Activated naive CD4-positive, alpha-beta T cell treated with anti-CD3 and anti-CD28 coated beads for 36 hours (primary cell): ENCODE measurements at regions of chr1 and their contacts with region 1.

Region 1: GRCh38 chr1:48498096-48498791 is 26.2 kb upstream of the SPATA6 start:
- DNase-seq: peak; percentile 85
- H3K4me3 Mint-ChIP-seq: no peak overlapping the region
- H3K27ac Mint-ChIP-seq: no peak overlapping the region
- H3K4me1 Mint-ChIP-seq: peaks cover 5% of the 10 kb centered on the region
- H3K27me3 Mint-ChIP-seq: peaks cover 4% of the 10 kb centered on the region

Region 2: DNA sequence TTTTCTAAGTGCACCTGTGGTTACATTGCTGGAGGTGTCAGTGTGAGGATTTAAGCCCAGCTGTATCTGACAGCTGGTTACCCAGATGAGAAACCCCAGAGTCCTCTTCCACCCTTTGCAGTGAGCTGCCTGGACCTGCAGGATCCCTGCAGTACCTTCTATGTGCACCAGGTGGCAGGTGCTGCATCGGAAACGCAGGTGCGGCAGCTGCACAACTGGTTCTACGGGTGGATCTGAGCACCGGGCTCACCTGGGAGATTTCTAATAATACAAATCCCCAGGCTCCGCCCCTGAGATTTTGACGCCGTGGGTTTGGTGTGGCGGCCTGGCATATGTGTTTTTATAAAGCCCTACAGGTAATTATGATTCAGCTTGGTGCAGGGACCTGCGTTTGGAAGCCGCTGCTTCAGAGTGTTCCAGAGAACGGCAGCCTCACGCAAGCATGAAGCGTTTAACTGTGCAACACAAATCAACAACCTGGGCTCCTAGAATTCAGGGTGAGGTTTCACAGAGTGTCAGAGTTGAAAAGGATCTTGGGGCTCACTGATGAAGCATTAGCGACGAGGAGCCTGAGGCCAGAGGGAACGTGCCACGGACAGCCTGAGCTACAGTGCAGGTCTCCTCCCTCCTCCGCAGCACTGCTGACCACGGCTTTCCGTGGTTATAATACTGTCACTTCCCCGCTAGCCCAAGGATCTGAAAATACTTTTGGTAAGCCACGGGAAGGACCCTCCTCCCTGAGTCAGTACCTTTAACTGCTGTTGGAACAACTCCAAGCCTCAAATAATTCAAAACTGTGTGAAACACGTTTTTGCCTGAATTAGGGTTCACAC is 404.3 kb before region 1 on chr1:
- CTCF ChIA-PET with region 1: interaction called, 5 read pairs
- intact Hi-C with region 1: loop called (anchors 5 kb)
- DNase-seq: peak; percentile 88
- H3K4me3 Mint-ChIP-seq: peak overlapping the region; percentile 42
- H3K27ac Mint-ChIP-seq: no peak overlapping the region
- H3K4me1 Mint-ChIP-seq: peaks cover 5% of the 10 kb centered on the region
- H3K27me3 Mint-ChIP-seq: peaks cover 45% of the 10 kb centered on the region

Region 3: GRCh38 chr1:48109390-48110013 is 388.7 kb before region 1 on chr1:
- CTCF ChIA-PET with region 1: interaction called, 6 read pairs
- intact Hi-C with region 1: loop called (anchors 1 kb)
- DNase-seq: peak; percentile 17
- H3K4me3 Mint-ChIP-seq: no peak overlapping the region
- H3K27ac Mint-ChIP-seq: no peak overlapping the region
- H3K4me1 Mint-ChIP-seq: peaks cover 4% of the 10 kb centered on the region
- H3K27me3 Mint-ChIP-seq: peaks cover 20% of the 10 kb centered on the region

Region 4: DNA sequence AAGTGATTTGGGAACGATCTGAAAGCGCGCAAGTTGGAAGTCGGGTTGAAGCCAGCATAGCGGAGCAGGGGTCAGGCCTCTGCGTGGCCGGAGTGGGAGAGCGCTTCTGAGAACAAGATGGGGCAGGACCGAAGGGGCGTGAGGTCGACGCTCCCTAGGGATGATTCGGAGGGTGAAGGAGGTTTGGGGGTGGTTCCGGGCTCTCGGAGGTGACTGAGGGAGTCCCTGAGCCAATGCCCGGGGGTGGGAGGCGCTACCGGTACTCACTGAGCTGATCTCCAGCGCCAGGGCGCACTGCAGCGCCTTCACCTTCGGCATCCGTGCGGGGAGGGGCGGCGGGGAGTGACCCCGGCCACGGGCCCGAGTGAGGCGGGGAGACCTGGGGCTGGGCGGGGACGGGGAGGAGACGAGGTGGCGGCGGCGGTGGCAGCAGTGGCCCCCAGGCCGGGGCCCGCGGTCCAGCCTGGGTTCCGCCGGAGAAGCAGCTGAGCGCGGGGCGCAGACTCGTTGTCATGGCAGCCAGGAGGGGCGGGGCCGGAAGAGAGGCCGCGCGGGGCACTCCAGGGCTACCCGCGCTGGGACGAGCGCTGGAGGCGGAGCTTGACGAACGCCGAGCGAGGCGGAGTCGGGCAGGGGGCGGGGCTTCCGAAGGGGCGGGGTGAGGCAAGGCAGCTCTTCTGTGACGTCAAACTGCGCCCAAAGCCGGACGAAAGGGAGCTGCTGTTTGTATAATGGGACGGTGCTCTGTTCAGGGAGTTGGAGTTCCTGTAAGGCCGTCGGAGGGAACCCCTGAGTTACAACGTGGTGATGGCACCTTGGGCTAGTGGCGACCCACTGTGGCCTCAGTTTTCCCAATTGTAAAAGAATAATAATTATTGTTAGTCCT is 26.3 kb before region 1 on chr1 and contains the start of gene SPATA6:
- CTCF ChIA-PET with region 1: interaction called, 7 read pairs
- intact Hi-C with region 1: loop called (anchors 1 kb)
- DNase-seq: peak; percentile 97
- H3K4me3 Mint-ChIP-seq: peak within 1 kb of the TSS; percentile 80
- H3K27ac Mint-ChIP-seq: no peak within 1 kb of the TSS
- H3K4me1 Mint-ChIP-seq: peaks cover 23% of the 10 kb centered on the region
- H3K27me3 Mint-ChIP-seq: peaks cover 20% of the 10 kb centered on the region
- total RNA-seq, gene SPATA6: 1.6 to 1.8 TPM

Region 5: DNA sequence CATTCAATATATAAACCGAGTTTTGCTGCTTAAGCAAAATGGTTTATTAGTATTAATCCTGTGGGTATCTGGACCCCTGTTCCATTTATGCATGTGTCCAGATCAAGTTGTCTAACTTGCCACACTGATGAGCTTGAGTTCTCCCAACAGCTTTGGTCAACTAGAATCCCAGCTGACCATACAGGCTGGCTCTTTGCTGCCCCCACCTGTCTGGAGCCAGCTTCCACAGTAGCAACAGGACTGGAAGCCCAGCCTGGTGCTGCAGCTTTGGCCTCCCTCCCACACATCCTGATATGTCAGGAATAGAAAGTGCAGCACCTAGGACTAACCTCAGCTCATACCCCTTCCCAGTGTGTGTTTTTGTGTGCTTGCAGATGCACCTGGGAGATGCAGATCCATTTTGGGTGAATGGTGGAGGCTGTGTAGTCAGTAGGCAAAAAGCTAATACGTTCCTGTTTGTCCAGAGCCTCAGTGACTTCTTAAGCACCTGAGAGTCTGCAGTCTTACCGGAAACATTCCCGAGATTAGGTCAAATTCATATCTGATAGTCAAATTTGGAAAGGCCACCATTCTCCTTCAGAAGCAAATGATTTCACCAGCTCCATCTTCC is 319.4 kb after region 1 on chr1:
- CTCF ChIA-PET with region 1: no interaction called
- intact Hi-C with region 1: loop called (anchors 5 kb)
- DNase-seq: peak; percentile 56
- H3K4me3 Mint-ChIP-seq: no peak overlapping the region
- H3K27ac Mint-ChIP-seq: no peak overlapping the region
- H3K4me1 Mint-ChIP-seq: no peaks in the 10 kb centered on the region
- H3K27me3 Mint-ChIP-seq: peaks cover 5% of the 10 kb centered on the region